WTC11 (cell line): ENCODE measurements at regions of chr2 and their contacts with region 1.

Region 1: GRCh38 chr2:105301646-105302045 is 27.9 kb downstream of the TGFBRAP1 start:
- DNase-seq: no peak
- ATAC-seq: no peak
- H3K4me3 Mint-ChIP-seq: no peak overlapping the region
- H3K27ac Mint-ChIP-seq: no peak overlapping the region
- H3K4me1 Mint-ChIP-seq: no peaks in the 10 kb centered on the region
- H3K27me3 Mint-ChIP-seq: no peaks in the 10 kb centered on the region
- CTCF ChIP-seq: no peak

Region 2: GRCh38 chr2:103664690-103665089 is 1637.0 kb before region 1 on chr2:
- CTCF ChIA-PET with region 1: no interaction called
- POLR2A ChIA-PET with region 1: interaction called, 12 read pairs
- DNase-seq: no peak
- ATAC-seq: peak; percentile 73
- H3K4me3 Mint-ChIP-seq: no peak overlapping the region
- H3K27ac Mint-ChIP-seq: no peak overlapping the region
- H3K4me1 Mint-ChIP-seq: peaks cover 13% of the 10 kb centered on the region
- H3K27me3 Mint-ChIP-seq: no peaks in the 10 kb centered on the region
- CTCF ChIP-seq: no peak